T-cell (primary cell): ENCODE measurements at regions of chr10 and their contacts with region 1.

Region 1: GRCh38 chr10:119270762-119271366 is 63.5 kb downstream of the GRK5 start:
- DNase-seq: peak in 34 of 35 experiments; percentile 26 to 69 (median 48)
- ATAC-seq: peak in 2 of 4 experiments; percentile 39 to 47
- H3K4me3 ChIP-seq: peak overlapping the region; percentile 23 to 27
- H3K4me3 Mint-ChIP-seq: peak overlapping the region; percentile 51 to 54 (median 54)
- H3K27ac ChIP-seq: peak overlapping the region; percentile 96
- H3K27ac Mint-ChIP-seq: peak overlapping the region; percentile 91 to 95
- H3K4me1 ChIP-seq: peaks cover 33 to 69% of the 10 kb centered on the region in 2 experiments
- H3K4me1 Mint-ChIP-seq: peaks cover 70 to 85% (median 73%) of the 10 kb centered on the region in 3 donors
- H3K27me3 ChIP-seq: no peaks in the 10 kb centered on the region
- H3K27me3 Mint-ChIP-seq: no peaks in the 10 kb centered on the region

Region 2: DNA sequence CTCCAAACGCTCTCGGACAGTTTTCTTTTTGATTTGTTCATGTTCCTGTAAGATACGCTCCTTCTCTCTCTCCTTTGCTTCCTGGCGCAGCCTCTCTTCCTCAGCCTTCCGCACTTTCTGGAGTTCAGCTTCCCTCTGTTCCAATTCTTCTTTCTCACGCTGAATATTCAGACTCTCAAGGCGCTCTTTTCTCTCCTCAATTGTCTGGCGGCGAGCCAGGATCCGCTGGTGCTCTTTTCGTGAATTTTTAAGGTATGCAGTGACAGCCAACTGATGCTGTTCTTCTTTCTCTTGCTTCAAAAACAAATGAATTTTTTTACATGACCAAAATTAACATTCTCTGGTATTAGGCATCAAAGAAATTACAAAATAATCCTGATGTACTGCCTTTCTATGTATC is 212.9 kb before region 1 on chr10:
- CTCF ChIA-PET with region 1: no interaction called
- POLR2A ChIA-PET with region 1: no interaction called
- DNase-seq: no peak
- ATAC-seq: no peak
- H3K4me3 ChIP-seq: no peak overlapping the region
- H3K4me3 Mint-ChIP-seq: peak overlapping the region in 1 of 3 donors; percentile 20
- H3K27ac ChIP-seq: no peak overlapping the region
- H3K27ac Mint-ChIP-seq: no peak overlapping the region
- H3K4me1 ChIP-seq: no peaks in the 10 kb centered on the region
- H3K4me1 Mint-ChIP-seq: peaks cover 16 to 20% (median 18%) of the 10 kb centered on the region in 3 donors
- H3K27me3 ChIP-seq: no peaks in the 10 kb centered on the region
- H3K27me3 Mint-ChIP-seq: no peaks in the 10 kb centered on the region

Region 3: DNA sequence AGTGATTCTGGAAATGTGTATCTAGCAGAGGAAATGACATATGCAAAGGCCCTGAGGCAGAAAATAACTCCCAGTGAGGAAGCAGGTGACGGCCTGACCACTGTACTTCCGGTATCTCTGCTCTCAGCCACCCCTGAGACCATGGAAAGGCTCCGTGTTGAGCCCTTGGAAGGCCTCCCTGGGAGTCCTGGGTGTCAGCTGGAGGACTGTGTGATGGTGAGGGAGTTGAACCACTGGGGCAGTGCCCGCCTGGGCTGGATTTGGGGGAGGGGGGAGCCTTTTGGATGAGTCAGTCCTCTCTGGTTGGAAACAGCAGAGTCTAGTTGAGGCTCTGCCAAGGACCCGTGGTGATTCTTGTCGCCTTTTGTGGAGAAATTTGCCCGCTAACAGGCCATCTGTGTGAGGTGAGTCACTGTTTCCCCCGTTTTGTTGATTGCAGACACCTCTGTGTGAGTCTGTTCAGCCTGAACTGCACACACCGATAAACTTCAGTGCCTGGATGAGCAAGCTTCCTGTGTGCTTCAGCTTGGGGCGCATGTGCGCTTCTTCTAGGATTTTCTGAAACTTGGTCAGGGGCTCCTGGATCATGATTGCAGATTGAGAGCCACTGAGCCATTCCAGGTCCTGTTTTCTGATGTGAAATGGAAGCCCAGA is 35.1 kb after region 1 on chr10:
- CTCF ChIA-PET with region 1: interaction called, 4 to 10 read pairs
- POLR2A ChIA-PET with region 1: interaction called in 1 of 2 experiments, 3 read pairs
- DNase-seq: peak; percentile 50 to 89 (median 74)
- ATAC-seq: peak; percentile 76 to 89 (median 88)
- H3K4me3 ChIP-seq: peak overlapping the region; percentile 29 to 44
- H3K4me3 Mint-ChIP-seq: peak overlapping the region; percentile 84 to 89 (median 84)
- H3K27ac ChIP-seq: peak overlapping the region; percentile 97
- H3K27ac Mint-ChIP-seq: peak overlapping the region; percentile 97 to 98
- H3K4me1 ChIP-seq: peaks cover 24 to 83% of the 10 kb centered on the region in 2 experiments
- H3K4me1 Mint-ChIP-seq: peaks cover 59 to 87% (median 68%) of the 10 kb centered on the region in 3 donors
- H3K27me3 ChIP-seq: peaks cover 0 to 15% of the 10 kb centered on the region in 2 experiments
- H3K27me3 Mint-ChIP-seq: no peaks in the 10 kb centered on the region